ENCODE measurements at regions of chr5 and their contacts with region 1.

Region 1: DNA sequence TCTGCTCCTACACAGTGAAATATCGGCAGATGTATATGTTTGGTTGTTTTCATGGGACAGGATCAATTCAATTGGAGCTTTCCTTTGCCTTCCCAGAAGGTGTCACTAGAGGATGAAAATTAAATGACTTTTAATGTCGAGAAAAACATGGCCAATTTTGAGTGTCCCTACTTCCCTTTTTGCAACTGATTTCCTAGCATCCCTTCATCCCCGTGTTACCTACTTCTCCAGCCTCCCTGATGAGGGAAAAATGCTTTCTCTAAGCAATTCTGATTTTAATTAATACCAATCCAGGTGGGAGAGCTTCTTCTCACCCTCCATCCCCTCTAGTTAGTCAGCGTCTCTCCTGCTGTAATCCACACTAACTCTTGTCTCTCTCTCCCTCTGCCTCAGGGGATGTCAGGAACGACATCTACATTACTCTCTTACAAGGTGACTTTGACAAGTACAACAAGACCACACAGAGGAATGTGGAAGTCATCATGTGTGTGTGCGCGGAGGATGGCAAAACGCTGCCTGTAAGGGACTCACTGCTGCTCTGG is 64.9 kb downstream of the DOCK2 start:
- DNase-seq: no peak
- H3K4me3 Mint-ChIP-seq: no peak overlapping the region
- H3K27ac Mint-ChIP-seq: peak overlapping the region; percentile 60
- H3K4me1 Mint-ChIP-seq: peaks cover 41% of the 10 kb centered on the region
- H3K27me3 Mint-ChIP-seq: no peaks in the 10 kb centered on the region

Region 2: DNA sequence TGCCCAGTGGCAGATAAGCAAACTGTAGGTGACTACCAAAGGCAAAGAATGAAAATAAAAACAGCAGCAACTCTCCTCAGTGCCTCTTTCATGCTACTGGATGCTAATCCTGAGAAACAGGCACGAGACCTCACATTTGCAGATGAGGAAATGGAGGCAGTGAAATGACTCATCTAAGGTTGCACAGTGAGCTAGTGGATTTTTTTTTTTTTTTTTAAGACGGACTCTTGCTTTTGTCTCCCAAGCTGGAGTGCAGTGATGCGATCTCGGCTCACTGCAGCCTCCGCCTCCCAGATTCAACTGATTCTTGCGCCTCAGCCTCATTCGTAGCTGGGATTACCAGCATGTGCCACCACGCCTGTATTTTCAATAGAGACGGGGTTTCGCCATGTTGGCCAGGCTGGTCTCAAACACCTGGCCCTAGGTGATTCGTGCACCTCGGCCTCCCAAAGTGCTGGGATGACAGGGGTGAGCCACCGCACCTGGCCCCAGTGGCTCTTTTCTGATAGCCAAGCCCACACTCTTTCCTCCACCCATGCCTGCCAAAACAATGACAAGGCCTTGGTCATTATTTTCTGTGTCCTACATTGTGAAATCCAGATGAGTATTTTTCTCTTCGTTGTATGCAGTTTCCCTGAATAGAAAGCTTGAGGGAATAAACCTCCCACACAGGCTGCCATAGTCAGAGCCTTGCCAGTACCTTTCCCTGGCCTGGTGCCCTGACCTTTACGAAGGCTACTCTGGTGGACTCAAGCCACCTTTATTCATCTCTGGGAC is 45.7 kb before region 1 on chr5:
- CTCF ChIA-PET with region 1: no interaction called
- POLR2A ChIA-PET with region 1: no interaction called
- intact Hi-C with region 1: loop called (anchors 1 kb)
- DNase-seq: peak; percentile 51
- H3K4me3 Mint-ChIP-seq: peak overlapping the region; percentile 29
- H3K27ac Mint-ChIP-seq: peak overlapping the region; percentile 78
- H3K4me1 Mint-ChIP-seq: peaks cover 69% of the 10 kb centered on the region
- H3K27me3 Mint-ChIP-seq: no peaks in the 10 kb centered on the region

Region 3: DNA sequence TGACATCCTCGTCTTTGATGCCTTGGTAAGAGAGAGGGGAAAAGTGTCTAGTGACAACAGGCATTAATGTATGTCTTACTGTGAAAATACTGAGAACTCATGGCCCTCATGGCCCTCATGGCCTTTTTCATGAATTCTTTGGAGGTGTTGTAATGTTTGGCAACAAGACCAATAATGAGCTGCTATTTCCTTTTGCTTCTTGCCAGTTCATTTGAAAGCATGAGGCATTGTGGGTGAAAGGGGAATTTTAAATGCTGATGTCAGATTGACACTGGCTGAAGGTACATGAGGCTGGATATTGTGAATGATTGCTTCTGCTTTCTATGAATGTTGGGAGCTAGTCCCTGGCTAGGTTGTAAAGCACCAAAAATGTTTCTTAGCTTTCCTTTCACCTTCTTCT is 14.3 kb after region 1 on chr5:
- CTCF ChIA-PET with region 1: interaction called, 4 read pairs
- POLR2A ChIA-PET with region 1: interaction called, 3 read pairs
- intact Hi-C with region 1: loop called (anchors 2 kb)
- DNase-seq: no peak
- H3K4me3 Mint-ChIP-seq: no peak overlapping the region
- H3K27ac Mint-ChIP-seq: peak overlapping the region; percentile 43
- H3K4me1 Mint-ChIP-seq: peaks cover 21% of the 10 kb centered on the region
- H3K27me3 Mint-ChIP-seq: no peaks in the 10 kb centered on the region

Region 4: GRCh38 chr5:169728418-169728817 is 26.4 kb after region 1 on chr5:
- CTCF ChIA-PET with region 1: no interaction called
- POLR2A ChIA-PET with region 1: no interaction called
- intact Hi-C with region 1: no loop called
- DNase-seq: no peak
- H3K4me3 Mint-ChIP-seq: no peak overlapping the region
- H3K27ac Mint-ChIP-seq: no peak overlapping the region
- H3K4me1 Mint-ChIP-seq: peaks cover 13% of the 10 kb centered on the region
- H3K27me3 Mint-ChIP-seq: no peaks in the 10 kb centered on the region

Region 5: DNA sequence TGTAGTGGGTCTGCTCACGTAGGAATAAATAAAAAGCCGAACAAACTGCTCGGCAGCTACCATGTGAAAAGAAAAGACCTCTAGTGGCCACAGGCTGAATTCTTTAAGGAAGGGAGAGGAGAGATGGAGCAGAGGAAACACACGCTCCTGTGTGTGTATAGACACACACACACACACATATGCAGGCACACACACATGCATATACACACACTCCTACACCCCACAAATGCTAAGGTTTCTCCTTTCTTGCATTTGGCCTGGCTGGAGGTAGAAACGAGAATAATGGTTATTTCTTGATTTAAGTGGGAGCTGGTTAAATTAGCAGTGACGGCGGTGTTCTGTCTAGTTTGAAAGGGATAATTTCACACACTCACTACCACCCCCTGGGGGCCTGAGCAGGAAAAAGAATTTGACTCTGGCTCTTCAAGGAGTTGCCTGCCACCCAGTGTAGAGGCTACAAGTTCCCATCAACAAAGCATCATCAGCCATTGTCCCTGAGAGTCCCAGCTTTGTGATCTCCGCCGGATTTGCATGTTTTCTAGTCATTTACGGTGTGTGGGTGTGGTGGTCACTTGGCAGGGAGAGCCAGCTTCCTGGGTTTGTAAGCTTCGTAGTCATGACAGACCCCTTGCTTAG is 278.6 kb after region 1 on chr5 and contains the start of gene INSYN2B:
- CTCF ChIA-PET with region 1: interaction called, 4 read pairs
- POLR2A ChIA-PET with region 1: no interaction called
- intact Hi-C with region 1: loop called (anchors 1 kb)
- DNase-seq: peak; percentile 42
- H3K4me3 Mint-ChIP-seq: no peak within 1 kb of the TSS
- H3K27ac Mint-ChIP-seq: no peak within 1 kb of the TSS
- H3K4me1 Mint-ChIP-seq: no peaks in the 10 kb centered on the region
- H3K27me3 Mint-ChIP-seq: no peaks in the 10 kb centered on the region
- total RNA-seq, gene INSYN2B: not detected